Endothelial cell of umbilical vein (primary cell): ENCODE measurements at regions of chr1 and their contacts with region 1.

Region 1: GRCh38 chr1:234743791-234744611 is 134.0 kb upstream of the IRF2BP2 start:
- DNase-seq: peak; percentile 99
- H3K4me3 ChIP-seq: peak overlapping the region in 1 of 3 experiments; percentile 7
- H3K27ac ChIP-seq: peak overlapping the region; percentile 88
- H3K4me1 ChIP-seq: peaks cover 36% of the 10 kb centered on the region
- H3K27me3 ChIP-seq: no peaks in the 10 kb centered on the region
- CTCF ChIP-seq: peak in 1 of 2 donors; percentile 15
- POLR2A ChIP-seq: peak; percentile 91

Region 2: GRCh38 chr1:234373064-234373958 is 370.7 kb before region 1 on chr1 and contains the start of gene COA6:
- CTCF ChIA-PET with region 1: no interaction called
- POLR2A ChIA-PET with region 1: no interaction called
- dilution Hi-C with region 1: no loop called
- intact Hi-C with region 1: no loop called
- DNase-seq: peak; percentile 97
- H3K4me3 ChIP-seq: peak within 1 kb of the TSS; percentile 83 to 86 (median 85)
- H3K27ac ChIP-seq: peak within 1 kb of the TSS; percentile 86
- H3K4me1 ChIP-seq: peaks cover 16% of the 10 kb centered on the region
- H3K27me3 ChIP-seq: no peaks in the 10 kb centered on the region
- CTCF ChIP-seq: no peak
- POLR2A ChIP-seq: peak; percentile 89
- total RNA-seq, gene COA6: 34.2 and 42.7 TPM in 2 replicates

Region 3: GRCh38 chr1:234599617-234600417 is 144.2 kb before region 1 on chr1:
- CTCF ChIA-PET with region 1: interaction called, 7 read pairs
- POLR2A ChIA-PET with region 1: no interaction called
- dilution Hi-C with region 1: no loop called
- intact Hi-C with region 1: loop called (anchors 1 kb)
- DNase-seq: peak; percentile 92
- H3K4me3 ChIP-seq: peak overlapping the region; percentile 18 to 53 (median 32)
- H3K27ac ChIP-seq: peak overlapping the region; percentile 87
- H3K4me1 ChIP-seq: peaks cover 50% of the 10 kb centered on the region
- H3K27me3 ChIP-seq: no peaks in the 10 kb centered on the region
- CTCF ChIP-seq: peak in 1 of 2 donors; percentile 3
- POLR2A ChIP-seq: no peak

Region 4: DNA sequence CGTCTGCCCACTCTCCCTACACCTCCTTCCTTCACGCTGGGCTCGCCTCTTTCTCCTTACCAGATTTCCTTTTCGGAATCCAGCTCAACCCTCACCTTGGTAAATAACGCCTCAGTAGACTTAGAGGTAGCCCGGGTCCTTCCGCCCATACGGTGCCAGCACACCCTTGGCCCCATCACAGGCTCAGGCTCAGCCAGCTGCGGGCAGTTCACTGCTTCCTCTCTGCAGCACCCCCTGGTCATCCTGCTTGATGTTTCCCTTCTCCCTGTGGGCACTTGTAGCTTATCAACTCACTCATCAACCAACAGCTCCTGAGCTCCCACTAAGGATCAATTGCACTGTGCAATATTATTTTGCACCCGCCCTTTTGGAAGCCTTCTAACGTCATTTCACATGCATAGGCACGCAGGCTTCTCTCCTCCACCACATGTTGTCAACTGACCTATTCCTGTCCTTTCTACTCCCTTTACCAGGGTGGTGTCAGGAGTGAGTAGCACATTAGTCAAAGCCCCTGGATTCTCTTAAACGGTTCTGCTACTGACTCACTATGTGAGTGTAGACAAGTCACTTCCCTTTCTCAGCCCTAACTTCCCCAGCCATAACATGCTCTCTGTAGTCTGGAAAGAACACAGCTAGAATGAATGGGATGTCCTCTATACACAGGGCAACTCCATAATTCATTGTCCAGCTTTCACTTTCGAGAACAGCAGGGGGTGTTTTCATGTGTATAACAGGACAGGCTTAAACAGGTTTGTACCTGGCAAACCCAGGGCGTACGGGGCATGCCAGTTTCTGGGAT is 86.9 kb before region 1 on chr1:
- CTCF ChIA-PET with region 1: interaction called, 3 read pairs
- POLR2A ChIA-PET with region 1: no interaction called
- dilution Hi-C with region 1: no loop called
- intact Hi-C with region 1: loop called (anchors 1 kb)
- DNase-seq: peak; percentile 92
- H3K4me3 ChIP-seq: no peak overlapping the region
- H3K27ac ChIP-seq: peak overlapping the region; percentile 82
- H3K4me1 ChIP-seq: peaks cover 33% of the 10 kb centered on the region
- H3K27me3 ChIP-seq: no peaks in the 10 kb centered on the region
- CTCF ChIP-seq: no peak
- POLR2A ChIP-seq: no peak

Region 5: GRCh38 chr1:234670967-234671626 is 72.9 kb before region 1 on chr1:
- CTCF ChIA-PET with region 1: no interaction called
- POLR2A ChIA-PET with region 1: no interaction called
- dilution Hi-C with region 1: no loop called
- intact Hi-C with region 1: no loop called
- DNase-seq: no peak
- H3K4me3 ChIP-seq: no peak overlapping the region
- H3K27ac ChIP-seq: no peak overlapping the region
- H3K4me1 ChIP-seq: peaks cover 2% of the 10 kb centered on the region
- H3K27me3 ChIP-seq: no peaks in the 10 kb centered on the region
- CTCF ChIP-seq: no peak
- POLR2A ChIP-seq: no peak

Region 6: DNA sequence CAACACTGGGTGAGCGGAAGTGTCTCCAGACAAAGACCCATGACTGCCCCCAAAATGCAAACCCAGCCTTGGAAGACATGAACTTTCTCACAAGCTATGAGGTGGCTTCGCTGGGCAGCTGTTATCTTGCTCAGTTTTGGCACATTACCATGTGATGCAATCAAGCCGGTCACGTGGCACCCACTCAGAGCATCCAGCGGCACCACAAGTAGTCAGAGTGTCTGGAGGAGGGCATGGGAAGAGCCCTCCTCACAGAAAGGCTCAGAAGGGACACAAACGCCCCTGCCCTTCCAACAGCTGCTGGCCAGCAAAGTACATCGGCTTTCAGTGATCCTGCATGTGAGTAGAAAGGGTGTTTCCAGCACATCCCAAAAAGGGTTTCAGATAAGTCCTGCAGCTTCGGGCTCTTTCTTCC is 11.5 kb after region 1 on chr1:
- CTCF ChIA-PET with region 1: interaction called, 12 read pairs
- POLR2A ChIA-PET with region 1: no interaction called
- dilution Hi-C with region 1: no loop called
- intact Hi-C with region 1: no loop called
- DNase-seq: no peak
- H3K4me3 ChIP-seq: no peak overlapping the region
- H3K27ac ChIP-seq: no peak overlapping the region
- H3K4me1 ChIP-seq: peaks cover 2% of the 10 kb centered on the region
- H3K27me3 ChIP-seq: peaks cover 0 to 4% of the 10 kb centered on the region in 2 experiments
- CTCF ChIP-seq: no peak
- POLR2A ChIP-seq: no peak

Region 7: GRCh38 chr1:234862944-234863515 is 119.0 kb after region 1 on chr1:
- CTCF ChIA-PET with region 1: no interaction called
- POLR2A ChIA-PET with region 1: no interaction called
- dilution Hi-C with region 1: no loop called
- intact Hi-C with region 1: loop called (anchors 1 kb)
- DNase-seq: peak; percentile 96
- H3K4me3 ChIP-seq: no peak overlapping the region
- H3K27ac ChIP-seq: peak overlapping the region; percentile 85
- H3K4me1 ChIP-seq: peaks cover 46% of the 10 kb centered on the region
- H3K27me3 ChIP-seq: no peaks in the 10 kb centered on the region
- CTCF ChIP-seq: no peak
- POLR2A ChIP-seq: no peak

Region 8: DNA sequence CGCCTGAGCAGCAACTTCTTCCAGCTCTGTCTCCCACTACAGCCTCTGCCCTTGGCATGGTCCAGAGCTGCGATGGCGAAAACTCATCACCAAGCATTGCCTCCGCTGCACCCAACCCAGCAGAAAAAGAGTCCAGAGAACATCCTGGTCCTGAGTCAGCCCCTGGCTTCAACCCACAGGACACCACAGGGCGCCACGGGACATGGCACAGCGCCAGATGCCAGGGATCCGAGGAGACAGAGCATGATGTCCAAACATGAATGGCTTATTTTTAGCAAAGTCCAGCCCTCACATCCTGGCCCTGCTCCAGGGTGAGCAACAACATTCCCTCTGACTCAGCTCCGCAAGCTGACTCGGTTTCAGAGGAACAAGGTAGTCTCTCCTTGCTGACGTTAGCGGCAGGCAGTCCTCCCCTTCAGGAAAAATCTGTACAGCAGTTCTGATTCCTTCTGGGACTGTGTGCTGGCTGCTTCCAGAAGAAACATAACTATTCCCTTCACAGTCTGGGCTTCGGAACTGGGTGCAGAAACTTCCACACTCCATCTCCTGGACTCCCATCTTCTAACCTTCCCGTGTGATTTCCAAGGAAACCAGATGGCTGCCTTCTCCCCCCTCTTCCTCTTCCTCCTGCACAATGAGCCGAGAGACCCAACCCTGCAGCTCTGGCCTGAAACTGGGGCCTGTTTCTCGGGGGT is 253.3 kb after region 1 on chr1:
- CTCF ChIA-PET with region 1: interaction called, 3 read pairs
- POLR2A ChIA-PET with region 1: interaction called, 3 read pairs
- dilution Hi-C with region 1: no loop called
- intact Hi-C with region 1: loop called (anchors 1 kb)
- DNase-seq: peak; percentile 99
- H3K4me3 ChIP-seq: no peak overlapping the region
- H3K27ac ChIP-seq: peak overlapping the region; percentile 95
- H3K4me1 ChIP-seq: peaks cover 28% of the 10 kb centered on the region
- H3K27me3 ChIP-seq: no peaks in the 10 kb centered on the region
- CTCF ChIP-seq: no peak
- POLR2A ChIP-seq: peak; percentile 58

Region 9: GRCh38 chr1:235070819-235071218 is 326.8 kb after region 1 on chr1:
- CTCF ChIA-PET with region 1: no interaction called
- POLR2A ChIA-PET with region 1: no interaction called
- dilution Hi-C with region 1: no loop called
- intact Hi-C with region 1: no loop called
- DNase-seq: no peak
- H3K4me3 ChIP-seq: no peak overlapping the region
- H3K27ac ChIP-seq: no peak overlapping the region
- H3K4me1 ChIP-seq: peaks cover 27% of the 10 kb centered on the region
- H3K27me3 ChIP-seq: no peaks in the 10 kb centered on the region
- CTCF ChIP-seq: no peak
- POLR2A ChIP-seq: no peak